Calu3 (cell line): ENCODE measurements at regions of chr2 and their contacts with region 1.

Region 1: GRCh38 chr2:29238497-29238896 is 123.3 kb downstream of the CLIP4 start:
- DNase-seq: peak; percentile 69
- H3K4me3 Mint-ChIP-seq: no peak overlapping the region
- H3K27ac Mint-ChIP-seq: no peak overlapping the region
- H3K4me1 Mint-ChIP-seq: peaks cover 10% of the 10 kb centered on the region
- H3K27me3 Mint-ChIP-seq: peaks cover 96% of the 10 kb centered on the region
- CTCF ChIP-seq: peak; percentile 63

Region 2: GRCh38 chr2:28893476-28893875 is 345.0 kb before region 1 on chr2:
- CTCF ChIA-PET with region 1: no interaction called
- intact Hi-C with region 1: no loop called
- DNase-seq: no peak
- H3K4me3 Mint-ChIP-seq: no peak overlapping the region
- H3K27ac Mint-ChIP-seq: no peak overlapping the region
- H3K4me1 Mint-ChIP-seq: peaks cover 15% of the 10 kb centered on the region
- H3K27me3 Mint-ChIP-seq: no peaks in the 10 kb centered on the region
- CTCF ChIP-seq: no peak

Region 3: GRCh38 chr2:29213888-29214291 is 24.6 kb before region 1 on chr2:
- CTCF ChIA-PET with region 1: interaction called, 3 read pairs
- intact Hi-C with region 1: loop called (anchors 1 kb)
- DNase-seq: no peak
- H3K4me3 Mint-ChIP-seq: no peak overlapping the region
- H3K27ac Mint-ChIP-seq: no peak overlapping the region
- H3K4me1 Mint-ChIP-seq: no peaks in the 10 kb centered on the region
- H3K27me3 Mint-ChIP-seq: no peaks in the 10 kb centered on the region
- CTCF ChIP-seq: no peak